Pancreas (tissue), 10 donors: ENCODE measurements at regions of chr18 and their contacts with region 1.

Region 1: DNA sequence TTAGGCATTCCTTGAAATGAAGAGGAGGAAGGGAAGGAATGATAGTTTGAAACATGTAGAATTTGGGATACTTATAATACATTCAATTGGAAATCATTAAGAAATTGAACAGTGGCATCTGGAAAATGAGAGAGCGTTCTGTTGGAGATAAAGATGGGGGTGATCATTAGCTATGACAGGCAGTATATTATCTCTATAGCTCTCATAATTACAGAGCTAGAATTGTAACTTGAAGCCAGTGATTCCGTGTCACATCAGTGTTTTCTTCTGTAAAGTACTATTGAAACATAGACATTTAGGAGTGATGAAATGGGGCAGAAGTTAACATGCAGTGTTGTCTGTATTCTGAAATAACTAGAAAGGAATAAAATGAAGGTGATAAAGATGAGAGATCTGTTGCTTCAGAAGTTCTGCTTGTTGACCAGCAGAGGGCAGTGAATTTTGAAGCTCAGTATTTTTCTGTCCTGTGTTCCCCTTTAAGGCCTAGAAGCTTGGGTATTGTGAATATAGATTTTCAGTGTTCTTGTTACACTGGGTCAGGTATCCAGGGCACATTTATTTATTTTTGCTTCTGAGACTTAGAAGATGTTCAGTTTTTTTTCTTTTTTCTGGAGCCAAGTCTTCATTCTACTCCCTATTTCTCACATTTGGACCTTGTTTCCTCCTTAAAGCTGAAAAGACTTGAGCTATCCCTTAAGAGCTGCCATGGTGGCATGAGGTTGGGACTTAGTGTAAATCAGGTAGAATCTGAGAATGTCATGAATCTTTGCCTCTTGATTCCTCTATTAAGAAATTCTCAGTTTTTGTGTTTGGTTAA is 157.4 kb downstream of the TAF4B start:
- DNase-seq: no peak
- ATAC-seq: peak in 3 of 4 donors; percentile 72 to 84 (median 74)
- H3K4me3 ChIP-seq: no peak overlapping the region
- H3K27ac ChIP-seq: no peak overlapping the region
- H3K4me1 ChIP-seq: peaks cover 0 to 4% (median 0%) of the 10 kb centered on the region in 3 donors
- H3K27me3 ChIP-seq: no peaks in the 10 kb centered on the region
- CTCF ChIP-seq: peak; percentile 56 to 81 (median 66)

Region 2: GRCh38 chr18:25815659-25816058 is 568.0 kb before region 1 on chr18:
- intact Hi-C with region 1: no loop called
- DNase-seq: no peak
- ATAC-seq: no peak
- H3K4me3 ChIP-seq: no peak overlapping the region
- H3K27ac ChIP-seq: no peak overlapping the region
- H3K4me1 ChIP-seq: no peaks in the 10 kb centered on the region
- H3K27me3 ChIP-seq: no peaks in the 10 kb centered on the region
- CTCF ChIP-seq: no peak

Region 3: GRCh38 chr18:26317398-26317797 is 66.3 kb before region 1 on chr18:
- intact Hi-C with region 1: no loop called
- DNase-seq: no peak
- ATAC-seq: no peak
- H3K4me3 ChIP-seq: no peak overlapping the region
- H3K27ac ChIP-seq: no peak overlapping the region
- H3K4me1 ChIP-seq: no peaks in the 10 kb centered on the region
- H3K27me3 ChIP-seq: no peaks in the 10 kb centered on the region
- CTCF ChIP-seq: no peak

Region 4: DNA sequence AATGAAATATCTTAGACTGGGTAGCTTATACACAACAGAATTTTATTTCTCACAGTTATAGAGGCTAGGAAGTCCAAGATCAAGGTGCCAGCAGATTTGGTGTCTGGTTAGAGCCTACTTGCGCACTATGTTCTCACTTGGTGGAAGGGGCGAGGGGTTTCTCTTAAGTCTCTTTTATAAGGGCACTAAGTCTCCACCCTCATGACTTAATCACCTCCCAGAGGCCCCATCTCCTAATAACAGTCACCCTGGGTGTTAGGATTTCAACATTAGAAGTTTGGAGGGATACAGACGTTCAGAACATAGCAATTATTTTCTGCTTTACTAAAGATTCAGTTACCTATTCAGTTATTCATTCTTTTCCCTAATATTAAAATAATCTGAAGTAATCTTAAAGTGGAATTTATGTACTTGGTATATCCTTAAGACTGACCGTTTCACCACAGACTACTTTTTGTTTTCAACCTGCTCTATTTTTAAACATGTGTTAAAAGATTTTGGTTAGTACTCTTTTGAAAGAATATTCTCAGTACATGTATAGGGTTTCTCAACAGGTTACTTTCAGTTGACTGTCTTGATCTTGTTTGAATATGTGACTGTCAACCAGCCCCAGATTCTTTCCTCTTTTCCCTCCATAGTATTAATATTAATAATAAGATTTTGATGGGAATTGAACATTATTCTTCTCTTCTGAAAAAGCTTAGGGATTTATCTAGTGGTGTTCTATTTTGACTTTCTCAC is 27.4 kb before region 1 on chr18:
- intact Hi-C with region 1: no loop called
- DNase-seq: no peak
- ATAC-seq: no peak
- H3K4me3 ChIP-seq: no peak overlapping the region
- H3K27ac ChIP-seq: no peak overlapping the region
- H3K4me1 ChIP-seq: no peaks in the 10 kb centered on the region
- H3K27me3 ChIP-seq: no peaks in the 10 kb centered on the region
- CTCF ChIP-seq: no peak

Region 5: GRCh38 chr18:26487437-26487836 is 103.8 kb after region 1 on chr18:
- intact Hi-C with region 1: no loop called
- DNase-seq: no peak
- ATAC-seq: peak in 3 of 4 donors; percentile 56 to 76 (median 73)
- H3K4me3 ChIP-seq: no peak overlapping the region
- H3K27ac ChIP-seq: no peak overlapping the region
- H3K4me1 ChIP-seq: no peaks in the 10 kb centered on the region
- H3K27me3 ChIP-seq: no peaks in the 10 kb centered on the region
- CTCF ChIP-seq: no peak

Region 6: GRCh38 chr18:26656944-26657536 is 273.4 kb after region 1 on chr18:
- intact Hi-C with region 1: loop called in 1 of 3 experiments (anchors 10 kb)
- DNase-seq: peak; percentile 77 to 91 (median 82)
- ATAC-seq: peak; percentile 73 to 86 (median 82)
- H3K4me3 ChIP-seq: peak overlapping the region; percentile 53 to 81 (median 62)
- H3K27ac ChIP-seq: peak overlapping the region; percentile 44 to 92 (median 86)
- H3K4me1 ChIP-seq: peaks cover 0 to 15% (median 7%) of the 10 kb centered on the region in 3 donors
- H3K27me3 ChIP-seq: no peaks in the 10 kb centered on the region
- CTCF ChIP-seq: peak in 1 of 4 donors; percentile 13